ENCODE measurements at regions of chr17 and their contacts with region 1.

Region 1: DNA sequence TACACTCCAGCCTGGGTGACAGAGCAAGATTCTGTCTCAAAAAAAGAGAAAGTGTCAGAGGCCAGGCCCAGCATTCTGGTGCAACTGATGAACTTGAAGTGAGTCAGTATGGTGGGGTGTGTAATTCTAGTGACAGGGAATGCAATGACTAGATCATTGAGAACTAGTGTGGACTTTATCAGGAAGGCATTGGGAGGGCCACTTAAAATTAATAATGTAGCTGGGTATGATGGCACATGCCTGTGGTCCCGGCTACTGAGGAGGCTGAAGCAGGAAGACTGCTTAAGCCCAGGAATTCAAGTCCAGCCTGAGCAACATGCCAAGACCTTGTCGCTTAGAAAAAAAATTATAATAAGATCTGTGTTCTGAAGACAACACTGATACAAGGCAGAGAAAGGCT is 90.8 kb downstream of the STX8 start:
- DNase-seq: no peak
- H3K4me3 ChIP-seq: no peak overlapping the region
- H3K27ac ChIP-seq: no peak overlapping the region
- H3K4me1 ChIP-seq: no peaks in the 10 kb centered on the region
- H3K27me3 ChIP-seq: no peaks in the 10 kb centered on the region
- CTCF ChIP-seq: no peak
- EP300 ChIP-seq: no peak
- POLR2A ChIP-seq: no peak
- RAD21 ChIP-seq: no peak

Region 2: DNA sequence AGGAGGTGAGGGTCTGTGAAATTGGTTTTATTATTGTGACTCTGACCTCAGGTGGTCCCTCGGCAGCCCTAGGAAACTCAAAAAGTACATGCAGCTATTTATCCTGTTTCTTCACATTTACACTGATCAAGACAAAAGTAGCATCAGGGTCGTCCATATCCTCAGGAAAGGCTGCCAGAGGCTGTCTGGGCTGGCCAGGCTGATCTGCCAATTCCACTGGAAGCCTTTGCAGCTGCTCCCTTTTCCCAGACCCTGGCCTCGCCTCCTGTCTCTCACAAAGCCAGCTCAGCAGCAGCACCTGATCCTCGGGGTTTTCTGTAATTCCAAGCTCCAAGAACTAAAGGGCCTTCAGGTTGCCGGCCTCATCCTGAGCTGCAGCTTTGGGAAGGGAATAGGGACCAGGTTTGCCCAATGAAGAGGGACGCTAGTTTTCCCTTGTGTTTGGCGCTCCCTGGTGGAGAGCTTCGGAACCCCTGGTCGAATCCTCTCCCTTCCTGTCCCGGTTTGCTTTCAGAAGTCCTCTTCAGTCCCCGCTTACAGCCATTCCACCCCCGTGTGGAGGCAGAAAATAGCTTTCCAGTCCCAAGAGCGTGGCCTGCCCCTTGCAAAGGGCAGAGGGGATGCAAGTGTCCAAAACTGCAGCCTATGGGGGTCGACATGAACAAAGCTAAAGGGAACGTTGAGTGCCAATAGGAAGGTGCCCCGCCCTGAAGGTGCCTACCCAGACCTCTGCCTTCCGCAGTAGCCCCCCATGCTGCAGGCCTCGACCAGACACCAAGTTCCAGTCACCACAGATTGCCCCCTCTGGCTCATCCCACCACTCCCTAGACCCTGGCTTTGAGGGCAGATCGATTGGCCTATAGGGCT is 699.0 kb before region 1 on chr17:
- CTCF ChIA-PET with region 1: no interaction called
- POLR2A ChIA-PET with region 1: no interaction called
- DNase-seq: peak; percentile 78 to 99
- H3K4me3 ChIP-seq: no peak overlapping the region
- H3K27ac ChIP-seq: no peak overlapping the region
- H3K4me1 ChIP-seq: peaks cover 0 to 5% (median 3%) of the 10 kb centered on the region in 4 experiments; a peak in 5 of 7 replicates
- H3K27me3 ChIP-seq: no peaks in the 10 kb centered on the region; a peak in 2 of 7 replicates
- CTCF ChIP-seq: peak; percentile 75 to 93 (median 86)
- EP300 ChIP-seq: no peak
- POLR2A ChIP-seq: no peak
- RAD21 ChIP-seq: peak; percentile 92 to 94

Region 3: DNA sequence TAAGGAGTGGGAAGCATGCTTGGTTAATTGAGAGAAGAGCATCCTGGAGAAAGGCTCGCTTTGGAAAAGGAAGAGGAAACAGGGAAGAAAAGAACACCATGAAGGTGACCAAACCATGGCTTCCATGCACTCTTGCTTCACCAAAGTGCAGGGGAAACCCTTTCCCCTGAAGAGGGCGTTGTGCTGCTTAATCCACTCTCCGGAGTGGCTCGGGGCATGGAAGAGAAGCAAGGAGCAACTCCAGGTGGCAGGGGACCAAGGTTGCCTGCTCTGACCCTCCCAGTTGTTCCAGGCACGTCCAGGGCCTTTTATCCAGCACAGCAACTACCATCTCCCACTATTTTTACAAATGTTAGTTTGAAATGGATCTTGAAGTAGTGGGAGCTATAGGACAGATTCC is 17.3 kb before region 1 on chr17:
- CTCF ChIA-PET with region 1: interaction called, 11 read pairs
- POLR2A ChIA-PET with region 1: no interaction called
- DNase-seq: peak in 1 of 2 experiments; percentile 54
- H3K4me3 ChIP-seq: no peak overlapping the region
- H3K27ac ChIP-seq: no peak overlapping the region
- H3K4me1 ChIP-seq: no peaks in the 10 kb centered on the region; a peak in 1 of 7 replicates
- H3K27me3 ChIP-seq: no peaks in the 10 kb centered on the region
- CTCF ChIP-seq: peak; percentile 64 to 86 (median 76)
- EP300 ChIP-seq: no peak
- POLR2A ChIP-seq: no peak
- RAD21 ChIP-seq: peak; percentile 48 to 63

Region 4: DNA sequence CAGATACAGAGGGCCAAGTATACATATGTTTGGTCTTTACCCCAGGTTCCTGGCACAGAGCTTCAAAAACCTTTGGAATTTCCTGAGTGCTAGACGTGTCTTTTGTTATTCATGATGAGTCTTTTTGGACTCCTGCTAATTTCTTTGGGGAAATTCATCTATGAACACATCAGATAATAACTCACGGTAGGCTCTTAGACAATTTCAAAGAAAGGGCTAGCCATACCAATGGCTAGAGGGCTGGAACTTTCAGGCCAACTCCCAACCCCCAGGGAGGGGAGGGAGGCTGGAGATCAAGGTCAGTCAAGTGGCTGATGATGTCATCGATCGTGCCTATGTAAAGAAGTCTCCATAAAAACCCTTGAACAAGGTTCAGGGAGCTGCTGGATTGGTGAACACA is 11.1 kb before region 1 on chr17:
- CTCF ChIA-PET with region 1: interaction called, 12 read pairs
- POLR2A ChIA-PET with region 1: no interaction called
- DNase-seq: no peak
- H3K4me3 ChIP-seq: no peak overlapping the region
- H3K27ac ChIP-seq: no peak overlapping the region
- H3K4me1 ChIP-seq: peaks cover 0 to 7% (median 1%) of the 10 kb centered on the region in 4 experiments; a peak in 2 of 7 replicates
- H3K27me3 ChIP-seq: no peaks in the 10 kb centered on the region
- CTCF ChIP-seq: no peak
- EP300 ChIP-seq: no peak
- POLR2A ChIP-seq: no peak
- RAD21 ChIP-seq: no peak

Region 5: DNA sequence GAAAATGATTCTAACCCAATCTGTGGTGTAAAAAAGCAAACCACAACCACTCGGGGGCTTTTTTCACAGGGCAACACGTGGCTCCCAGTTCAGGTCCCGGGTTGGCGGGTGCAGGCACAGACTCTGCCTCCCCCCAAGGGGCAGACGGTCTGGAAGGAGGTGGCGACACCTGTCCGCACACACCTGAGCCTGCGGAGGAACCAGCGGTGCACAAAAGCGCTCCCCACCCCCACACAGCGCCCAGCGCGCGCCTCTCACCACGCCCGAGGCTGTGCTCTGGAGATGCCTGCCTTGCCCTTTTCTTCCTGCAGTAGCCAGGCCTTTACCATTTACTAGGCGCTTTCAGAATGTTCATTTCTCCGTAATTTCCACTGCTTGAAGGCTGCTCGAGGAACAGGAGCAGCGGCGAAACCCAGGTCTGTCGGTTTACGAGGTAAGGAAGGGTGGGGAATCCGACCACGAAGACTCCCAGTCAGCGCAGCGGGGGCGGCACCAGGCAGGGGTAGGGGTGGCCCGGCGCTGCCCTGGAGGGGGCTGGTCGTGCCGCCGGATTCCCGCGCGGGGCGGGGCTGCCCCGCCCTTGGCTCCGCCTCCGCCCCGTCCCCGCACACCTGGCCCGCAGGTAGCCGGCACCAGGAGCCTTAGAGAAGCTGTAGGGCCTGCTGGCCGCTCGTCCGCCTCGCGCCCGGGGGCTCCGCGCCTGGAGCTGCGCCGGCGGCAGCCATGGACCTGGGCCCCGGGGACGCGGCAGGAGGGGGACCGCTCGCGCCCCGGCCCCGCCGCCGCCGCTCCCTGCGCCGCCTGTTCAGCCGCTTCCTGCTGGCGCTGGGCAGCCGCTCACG is 160.3 kb after region 1 on chr17 and contains the start of gene USP43:
- CTCF ChIA-PET with region 1: no interaction called
- POLR2A ChIA-PET with region 1: no interaction called
- DNase-seq: peak in 1 of 2 experiments; percentile 83
- H3K4me3 ChIP-seq: peak within 1 kb of the TSS; percentile 65 to 78 (median 72)
- H3K27ac ChIP-seq: peak within 1 kb of the TSS; percentile 81
- H3K4me1 ChIP-seq: peaks cover 1 to 18% (median 6%) of the 10 kb centered on the region in 4 experiments; a peak in 5 of 7 replicates
- H3K27me3 ChIP-seq: peaks cover 0 to 12% (median 8%) of the 10 kb centered on the region in 4 experiments; a peak in 6 of 7 replicates
- CTCF ChIP-seq: no peak
- EP300 ChIP-seq: no peak
- POLR2A ChIP-seq: peak; percentile 43 to 55
- RAD21 ChIP-seq: no peak
- total RNA-seq, gene USP43: 6.9 and 7.2 TPM in 2 replicates